ENCODE measurements at regions of chr10 and their contacts with region 1.

Region 1: GRCh38 chr10:119872860-119873681 is 428 bp upstream of the MCMBP start:
- DNase-seq: peak; percentile 82 to 91 (median 87)
- H3K4me3 ChIP-seq: peak overlapping the region; percentile 94
- H3K4me3 Mint-ChIP-seq: peak overlapping the region; percentile 87 to 96 (median 90)
- H3K27ac ChIP-seq: peak overlapping the region; percentile 81
- H3K27ac Mint-ChIP-seq: peak overlapping the region; percentile 85 to 94 (median 91)
- H3K4me1 ChIP-seq: peaks cover 29% of the 10 kb centered on the region
- H3K4me1 Mint-ChIP-seq: peaks cover 33 to 44% (median 43%) of the 10 kb centered on the region in 3 donors
- H3K27me3 ChIP-seq: no peaks in the 10 kb centered on the region
- H3K27me3 Mint-ChIP-seq: no peaks in the 10 kb centered on the region

Region 2: GRCh38 chr10:119849031-119849789 is 23.9 kb before region 1 on chr10:
- CTCF ChIA-PET with region 1: no interaction called
- POLR2A ChIA-PET with region 1: no interaction called
- DNase-seq: no peak
- H3K4me3 ChIP-seq: no peak overlapping the region
- H3K4me3 Mint-ChIP-seq: peak overlapping the region in 1 of 7 donors; percentile 12
- H3K27ac ChIP-seq: no peak overlapping the region
- H3K27ac Mint-ChIP-seq: peak overlapping the region in 1 of 8 donors; percentile 15
- H3K4me1 ChIP-seq: no peaks in the 10 kb centered on the region
- H3K4me1 Mint-ChIP-seq: peaks cover 0 to 5% (median 4%) of the 10 kb centered on the region in 3 donors
- H3K27me3 ChIP-seq: no peaks in the 10 kb centered on the region
- H3K27me3 Mint-ChIP-seq: no peaks in the 10 kb centered on the region

Region 3: GRCh38 chr10:119892188-119893065 is 19.4 kb after region 1 on chr10 and contains the start of gene SEC23IP:
- CTCF ChIA-PET with region 1: interaction called, 12 read pairs
- POLR2A ChIA-PET with region 1: interaction called, 37 read pairs
- DNase-seq: peak; percentile 82 to 93 (median 85)
- H3K4me3 ChIP-seq: peak within 1 kb of the TSS; percentile 99
- H3K4me3 Mint-ChIP-seq: peak within 1 kb of the TSS; percentile 91 to 100 (median 99)
- H3K27ac ChIP-seq: peak within 1 kb of the TSS; percentile 95
- H3K27ac Mint-ChIP-seq: peak within 1 kb of the TSS; percentile 84 to 100 (median 99)
- H3K4me1 ChIP-seq: peaks cover 23% of the 10 kb centered on the region
- H3K4me1 Mint-ChIP-seq: peaks cover 50 to 52% (median 50%) of the 10 kb centered on the region in 3 donors
- H3K27me3 ChIP-seq: no peaks in the 10 kb centered on the region
- H3K27me3 Mint-ChIP-seq: no peaks in the 10 kb centered on the region
- total RNA-seq, gene SEC23IP: 74.0 to 79.0 TPM

Region 4: GRCh38 chr10:120034236-120034635 is 161.2 kb after region 1 on chr10:
- CTCF ChIA-PET with region 1: no interaction called
- POLR2A ChIA-PET with region 1: no interaction called
- DNase-seq: no peak
- H3K4me3 ChIP-seq: no peak overlapping the region
- H3K4me3 Mint-ChIP-seq: no peak overlapping the region
- H3K27ac ChIP-seq: no peak overlapping the region
- H3K27ac Mint-ChIP-seq: no peak overlapping the region
- H3K4me1 ChIP-seq: no peaks in the 10 kb centered on the region
- H3K4me1 Mint-ChIP-seq: no peaks in the 10 kb centered on the region
- H3K27me3 ChIP-seq: no peaks in the 10 kb centered on the region
- H3K27me3 Mint-ChIP-seq: peaks cover 0 to 19% of the 10 kb centered on the region in 2 donors

Measured in CD8-positive, alpha-beta memory T cell (primary cell).